Activated CD4-positive, alpha-beta memory T cell treated with anti-CD3 and anti-CD28 coated beads for 36 hours (primary cell): ENCODE measurements at regions of chr7 and their contacts with region 1.

Region 1: GRCh38 chr7:105652359-105652993 is 71.2 kb upstream of the EFCAB10 start:
- DNase-seq: peak; percentile 75
- H3K4me3 Mint-ChIP-seq: no peak overlapping the region
- H3K27ac Mint-ChIP-seq: no peak overlapping the region
- H3K4me1 Mint-ChIP-seq: peaks cover 10% of the 10 kb centered on the region
- H3K27me3 Mint-ChIP-seq: no peaks in the 10 kb centered on the region

Region 2: GRCh38 chr7:105673367-105674142 is 21.1 kb after region 1 on chr7:
- CTCF ChIA-PET with region 1: interaction called, 22 read pairs
- POLR2A ChIA-PET with region 1: interaction called, 3 read pairs
- intact Hi-C with region 1: no loop called
- DNase-seq: peak; percentile 38
- H3K4me3 Mint-ChIP-seq: no peak overlapping the region
- H3K27ac Mint-ChIP-seq: peak overlapping the region; percentile 95
- H3K4me1 Mint-ChIP-seq: peaks cover 63% of the 10 kb centered on the region
- H3K27me3 Mint-ChIP-seq: no peaks in the 10 kb centered on the region

Region 3: DNA sequence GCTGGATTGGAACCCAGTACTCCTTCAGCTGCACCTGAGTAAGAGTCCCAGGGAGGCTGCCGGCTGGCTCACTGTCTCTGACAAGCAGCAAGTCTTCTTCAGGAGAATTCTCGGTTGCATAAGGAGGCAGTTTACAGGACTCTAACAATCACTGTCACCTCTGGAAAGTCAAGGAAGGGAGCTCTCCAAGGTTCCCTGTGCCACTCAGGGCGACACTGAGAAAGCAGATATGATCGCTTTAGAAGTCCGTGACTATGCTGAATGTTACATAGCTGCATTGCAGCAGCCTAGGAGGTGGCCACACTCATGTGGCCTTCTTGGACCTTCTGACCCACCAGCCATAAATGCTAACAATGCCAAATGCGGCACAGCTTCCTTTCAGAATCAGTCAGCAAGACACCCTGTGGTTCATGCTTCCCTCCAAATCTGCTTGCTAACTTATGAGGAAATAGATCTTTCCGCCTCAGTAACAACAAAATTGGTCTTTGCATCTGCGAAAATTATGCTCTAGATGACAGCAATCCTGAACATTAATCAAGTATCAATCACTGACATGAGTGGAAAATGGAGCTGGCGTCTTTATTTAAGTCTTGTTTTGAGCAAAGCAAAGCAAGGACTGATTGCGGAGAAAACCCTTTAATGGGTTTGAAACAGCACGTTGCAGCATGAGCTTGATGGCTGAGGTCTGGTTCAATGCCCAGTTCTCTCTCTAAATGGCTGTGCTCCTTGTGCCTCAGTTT is 91.0 kb after region 1 on chr7:
- CTCF ChIA-PET with region 1: interaction called, 20 read pairs
- POLR2A ChIA-PET with region 1: no interaction called
- intact Hi-C with region 1: no loop called
- DNase-seq: peak; percentile 37
- H3K4me3 Mint-ChIP-seq: no peak overlapping the region
- H3K27ac Mint-ChIP-seq: no peak overlapping the region
- H3K4me1 Mint-ChIP-seq: peaks cover 18% of the 10 kb centered on the region
- H3K27me3 Mint-ChIP-seq: no peaks in the 10 kb centered on the region

Region 4: GRCh38 chr7:106022193-106022821 is 369.8 kb after region 1 on chr7:
- CTCF ChIA-PET with region 1: interaction called, 25 read pairs
- POLR2A ChIA-PET with region 1: no interaction called
- intact Hi-C with region 1: no loop called
- DNase-seq: peak; percentile 85
- H3K4me3 Mint-ChIP-seq: peak overlapping the region; percentile 14
- H3K27ac Mint-ChIP-seq: peak overlapping the region; percentile 76
- H3K4me1 Mint-ChIP-seq: peaks cover 40% of the 10 kb centered on the region
- H3K27me3 Mint-ChIP-seq: no peaks in the 10 kb centered on the region